ENCODE measurements at regions of chr5 and their contacts with region 1.

Region 1: DNA sequence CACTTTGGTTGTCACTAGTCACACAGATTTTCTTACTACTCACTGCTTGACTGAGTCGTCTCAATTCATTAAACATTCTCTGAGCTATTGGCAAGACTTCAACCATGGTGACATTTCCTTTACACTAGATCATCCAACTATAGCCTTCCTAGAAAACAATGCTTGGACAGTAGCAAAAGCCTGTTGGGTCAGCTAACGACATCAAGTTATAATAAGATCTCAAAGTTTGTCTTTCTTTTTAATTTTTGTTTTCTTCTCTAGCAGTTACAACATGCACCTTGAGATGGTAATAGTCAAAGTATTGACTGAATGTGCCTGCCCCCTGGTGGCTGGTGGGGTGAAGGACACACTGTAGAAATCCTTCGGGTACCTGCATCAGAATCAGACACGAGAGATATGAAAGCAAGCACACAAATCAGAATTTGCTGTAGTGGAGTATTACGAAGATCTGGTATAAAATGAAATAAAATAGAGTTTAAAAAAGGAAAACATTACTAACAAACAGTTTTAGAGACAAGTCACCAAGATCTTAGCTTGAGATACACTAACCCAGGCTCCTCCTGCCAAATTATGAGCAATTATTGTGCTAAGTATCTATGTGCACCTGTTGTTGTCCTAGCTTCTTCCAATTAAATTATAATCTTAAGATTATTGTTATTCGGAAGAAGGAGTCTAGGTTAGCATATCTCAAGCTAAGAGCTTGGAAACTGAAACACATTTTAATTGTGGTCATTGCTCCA is 81.2 kb downstream of the ARL15 start:
- DNase-seq: peak; percentile 66
- ATAC-seq: peak; percentile 73
- H3K4me3 ChIP-seq: no peak overlapping the region
- H3K4me3 Mint-ChIP-seq: no peak overlapping the region
- H3K27ac ChIP-seq: no peak overlapping the region
- H3K27ac Mint-ChIP-seq: no peak overlapping the region
- H3K4me1 ChIP-seq: peaks cover 5 to 8% of the 10 kb centered on the region in 2 donors
- H3K4me1 Mint-ChIP-seq: peaks cover 32% of the 10 kb centered on the region
- H3K27me3 ChIP-seq: no peaks in the 10 kb centered on the region
- H3K27me3 Mint-ChIP-seq: no peaks in the 10 kb centered on the region
- CTCF ChIP-seq: peak; percentile 97

Region 2: GRCh38 chr5:53170748-53171349 is 1058.4 kb before region 1 on chr5:
- CTCF ChIA-PET with region 1: interaction called, 3 read pairs
- POLR2A ChIA-PET with region 1: no interaction called
- intact Hi-C with region 1: loop called (anchors 5 kb)
- DNase-seq: peak; percentile 9
- ATAC-seq: no peak
- H3K4me3 ChIP-seq: no peak overlapping the region
- H3K4me3 Mint-ChIP-seq: no peak overlapping the region
- H3K27ac ChIP-seq: no peak overlapping the region
- H3K27ac Mint-ChIP-seq: no peak overlapping the region
- H3K4me1 ChIP-seq: no peaks in the 10 kb centered on the region
- H3K4me1 Mint-ChIP-seq: no peaks in the 10 kb centered on the region
- H3K27me3 ChIP-seq: peaks cover 0 to 2% (median 0%) of the 10 kb centered on the region in 4 experiments
- H3K27me3 Mint-ChIP-seq: peaks cover 14% of the 10 kb centered on the region
- CTCF ChIP-seq: peak; percentile 42

Region 3: DNA sequence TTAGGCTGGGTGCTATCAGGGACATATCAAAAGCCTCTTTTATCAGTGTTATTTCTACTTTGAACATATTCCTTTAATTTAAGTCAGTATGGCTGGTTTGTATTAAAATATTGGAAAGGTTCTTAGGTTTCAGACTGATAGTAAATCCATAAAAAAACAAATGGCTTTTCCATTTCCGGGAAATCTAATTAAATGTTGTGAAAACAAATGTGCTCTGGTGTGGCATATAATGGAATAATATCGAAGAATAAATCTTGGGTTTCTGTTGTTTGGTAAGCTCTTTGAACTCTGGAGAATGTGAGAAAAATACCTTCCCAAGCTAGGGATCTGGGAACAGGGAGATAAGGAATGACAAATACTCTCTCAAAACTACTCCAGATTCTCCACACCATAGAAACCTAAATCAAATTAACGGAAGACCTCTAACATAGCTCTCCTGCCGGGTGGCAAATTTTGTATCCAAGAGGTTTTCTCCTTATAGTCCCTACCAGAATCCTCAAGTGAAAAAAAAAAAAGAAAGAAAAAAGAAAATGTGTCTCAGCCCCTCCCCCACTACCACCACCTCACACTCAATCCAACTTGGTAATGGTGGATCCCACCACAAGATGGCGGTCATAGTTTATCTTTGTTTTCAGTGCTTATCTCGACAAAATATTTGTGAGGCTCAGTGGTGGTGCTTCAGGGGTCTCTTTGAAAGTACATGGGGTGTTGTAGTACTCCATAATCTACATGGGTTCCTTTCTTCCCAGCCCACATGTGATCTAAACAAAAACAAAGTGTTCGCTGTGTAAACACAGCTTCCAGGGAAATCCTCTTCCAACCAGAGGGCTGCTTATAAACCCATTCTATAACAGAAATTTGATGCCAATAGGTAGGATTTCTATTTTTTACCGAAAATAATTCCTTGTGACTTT is 803.4 kb before region 1 on chr5:
- CTCF ChIA-PET with region 1: no interaction called
- POLR2A ChIA-PET with region 1: no interaction called
- intact Hi-C with region 1: loop called (anchors 5 kb)
- DNase-seq: peak; percentile 13
- ATAC-seq: no peak
- H3K4me3 ChIP-seq: no peak overlapping the region
- H3K4me3 Mint-ChIP-seq: no peak overlapping the region
- H3K27ac ChIP-seq: no peak overlapping the region
- H3K27ac Mint-ChIP-seq: no peak overlapping the region
- H3K4me1 ChIP-seq: no peaks in the 10 kb centered on the region
- H3K4me1 Mint-ChIP-seq: no peaks in the 10 kb centered on the region
- H3K27me3 ChIP-seq: no peaks in the 10 kb centered on the region
- H3K27me3 Mint-ChIP-seq: peaks cover 8% of the 10 kb centered on the region
- CTCF ChIP-seq: no peak

Measured in B cell (primary cell).